Naive thymus-derived CD4-positive, alpha-beta T cell (primary cell): ENCODE measurements at regions of chr15 and their contacts with region 1.

Region 1: DNA sequence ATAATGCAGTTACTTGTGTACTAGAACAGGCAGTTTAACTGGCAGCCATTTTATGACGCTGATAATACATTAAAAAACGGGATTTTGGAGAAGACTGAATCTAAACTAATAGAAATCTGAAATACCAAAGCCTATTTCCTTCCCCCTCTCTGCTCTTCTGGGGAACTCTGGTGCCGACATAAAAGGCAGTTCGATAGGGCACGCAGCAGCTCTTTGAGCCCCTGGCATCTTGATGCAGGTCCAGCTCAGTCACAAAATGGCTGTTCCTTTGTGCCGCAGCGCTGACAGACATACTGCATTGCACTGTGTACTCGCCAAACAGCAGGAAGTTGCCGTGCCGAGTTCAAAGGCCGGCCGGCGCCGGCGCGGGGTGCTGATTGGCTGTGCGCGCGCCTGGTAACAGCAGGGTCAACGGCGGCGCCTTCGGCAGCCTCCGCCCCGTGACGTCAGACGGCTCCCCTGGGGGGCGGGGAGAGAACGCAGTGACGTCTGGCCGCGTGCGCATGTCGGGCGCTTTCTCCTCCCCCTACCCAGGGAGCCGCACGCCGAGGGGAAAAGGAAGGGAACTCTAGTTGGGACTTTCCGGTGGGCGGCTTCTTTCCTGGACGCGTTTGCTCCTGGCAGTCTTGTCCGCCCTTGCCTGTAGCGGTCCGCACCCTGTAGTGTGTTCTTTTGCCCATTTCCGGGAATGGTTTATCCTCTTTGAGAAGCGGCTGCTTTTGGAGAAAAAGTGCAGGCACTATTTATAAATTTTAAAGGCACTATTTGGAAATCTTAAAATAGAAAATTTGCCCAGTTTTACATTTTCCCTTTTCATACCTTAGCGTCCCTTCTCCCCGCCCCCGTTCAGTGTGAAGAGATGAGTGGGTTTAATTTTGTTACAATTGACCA is 4.1 kb downstream of the CHD2 start:
- DNase-seq: peak; percentile 99
- ATAC-seq: peak; percentile 90
- H3K4me3 ChIP-seq: peak overlapping the region; percentile 79
- H3K4me3 Mint-ChIP-seq: peak overlapping the region; percentile 81 to 100 (median 94)
- H3K27ac ChIP-seq: peak overlapping the region; percentile 97
- H3K27ac Mint-ChIP-seq: peak overlapping the region; percentile 96 to 100 (median 100)
- H3K4me1 ChIP-seq: peaks cover 48 to 54% of the 10 kb centered on the region in 2 donors
- H3K4me1 Mint-ChIP-seq: peaks cover 39 to 71% (median 64%) of the 10 kb centered on the region in 7 donors
- H3K27me3 ChIP-seq: no peaks in the 10 kb centered on the region
- H3K27me3 Mint-ChIP-seq: no peaks in the 10 kb centered on the region

Region 2: GRCh38 chr15:92184142-92184541 is 720.0 kb before region 1 on chr15:
- CTCF ChIA-PET with region 1: no interaction called
- POLR2A ChIA-PET with region 1: no interaction called
- intact Hi-C with region 1: no loop called
- DNase-seq: no peak
- ATAC-seq: no peak
- H3K4me3 ChIP-seq: no peak overlapping the region
- H3K4me3 Mint-ChIP-seq: no peak overlapping the region
- H3K27ac ChIP-seq: no peak overlapping the region
- H3K27ac Mint-ChIP-seq: no peak overlapping the region
- H3K4me1 ChIP-seq: no peaks in the 10 kb centered on the region
- H3K4me1 Mint-ChIP-seq: no peaks in the 10 kb centered on the region
- H3K27me3 ChIP-seq: no peaks in the 10 kb centered on the region
- H3K27me3 Mint-ChIP-seq: peaks cover 6 to 30% (median 17%) of the 10 kb centered on the region in 5 donors

Region 3: GRCh38 chr15:92645030-92645756 is 259.0 kb before region 1 on chr15:
- CTCF ChIA-PET with region 1: no interaction called
- POLR2A ChIA-PET with region 1: no interaction called
- intact Hi-C with region 1: no loop called
- DNase-seq: no peak
- ATAC-seq: peak; percentile 38
- H3K4me3 ChIP-seq: no peak overlapping the region
- H3K4me3 Mint-ChIP-seq: no peak overlapping the region
- H3K27ac ChIP-seq: no peak overlapping the region
- H3K27ac Mint-ChIP-seq: no peak overlapping the region
- H3K4me1 ChIP-seq: no peaks in the 10 kb centered on the region
- H3K4me1 Mint-ChIP-seq: peaks cover 0 to 4% (median 0%) of the 10 kb centered on the region in 7 donors
- H3K27me3 ChIP-seq: no peaks in the 10 kb centered on the region
- H3K27me3 Mint-ChIP-seq: peaks cover 0 to 13% (median 3%) of the 10 kb centered on the region in 5 donors

Region 4: DNA sequence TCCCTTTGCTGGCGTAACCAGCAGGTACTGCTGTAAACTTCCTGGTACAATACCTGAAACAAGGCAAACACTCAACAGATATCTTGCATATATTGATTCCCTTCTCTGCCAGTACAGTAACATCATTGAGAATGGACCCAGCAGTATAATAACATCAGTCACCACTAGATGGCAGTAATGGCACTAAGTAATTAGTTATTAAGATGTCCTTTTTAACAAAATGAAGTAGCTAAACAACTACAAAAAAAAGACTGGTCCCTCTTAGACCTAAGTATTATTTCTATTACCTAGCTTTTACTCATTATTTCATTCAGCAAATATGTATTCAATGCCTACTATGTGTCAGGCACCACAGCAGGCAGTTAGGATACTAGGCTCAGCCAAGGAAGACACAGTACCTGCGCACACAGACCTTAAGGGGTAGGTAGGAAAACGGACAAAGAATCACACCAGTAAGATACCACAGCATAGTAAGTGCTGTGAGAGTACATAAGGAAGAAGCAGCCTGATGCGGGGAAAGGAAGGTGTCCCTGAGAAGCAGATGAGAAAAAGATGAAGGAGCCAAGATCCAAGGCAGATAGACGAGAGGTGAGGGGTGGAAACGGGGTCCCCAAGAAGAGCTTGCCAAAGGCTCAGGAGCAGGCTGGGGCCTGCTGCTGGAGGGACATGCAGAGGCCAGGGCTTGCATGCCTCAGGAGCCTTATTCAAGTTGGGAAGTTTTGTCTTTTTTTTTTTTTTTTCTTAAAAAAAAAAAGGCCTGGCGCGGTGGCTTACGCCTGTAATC is 106.8 kb before region 1 on chr15:
- CTCF ChIA-PET with region 1: interaction called, 13 read pairs
- POLR2A ChIA-PET with region 1: interaction called, 13 read pairs
- intact Hi-C with region 1: no loop called
- DNase-seq: peak in 7 of 9 donors; percentile 61 to 81 (median 74)
- ATAC-seq: peak; percentile 95
- H3K4me3 ChIP-seq: no peak overlapping the region
- H3K4me3 Mint-ChIP-seq: peak overlapping the region in 1 of 10 donors; percentile 12
- H3K27ac ChIP-seq: no peak overlapping the region
- H3K27ac Mint-ChIP-seq: peak overlapping the region; percentile 72 to 95 (median 79)
- H3K4me1 ChIP-seq: peaks cover 3 to 4% of the 10 kb centered on the region in 2 donors
- H3K4me1 Mint-ChIP-seq: peaks cover 6 to 23% (median 12%) of the 10 kb centered on the region in 7 donors
- H3K27me3 ChIP-seq: no peaks in the 10 kb centered on the region
- H3K27me3 Mint-ChIP-seq: no peaks in the 10 kb centered on the region

Region 5: GRCh38 chr15:92803847-92804609 is 100.2 kb before region 1 on chr15:
- CTCF ChIA-PET with region 1: interaction called, 38 read pairs
- POLR2A ChIA-PET with region 1: interaction called, 420 read pairs
- intact Hi-C with region 1: loop called (anchors 1 kb)
- DNase-seq: peak in 1 of 9 donors; percentile 85
- ATAC-seq: peak; percentile 85
- H3K4me3 ChIP-seq: no peak overlapping the region
- H3K4me3 Mint-ChIP-seq: peak overlapping the region in 2 of 10 donors; percentile 44 to 49
- H3K27ac ChIP-seq: no peak overlapping the region
- H3K27ac Mint-ChIP-seq: peak overlapping the region in 7 of 9 donors; percentile 2 to 89 (median 50)
- H3K4me1 ChIP-seq: peaks cover 0 to 7% of the 10 kb centered on the region in 2 donors
- H3K4me1 Mint-ChIP-seq: peaks cover 14 to 53% (median 25%) of the 10 kb centered on the region in 7 donors
- H3K27me3 ChIP-seq: no peaks in the 10 kb centered on the region
- H3K27me3 Mint-ChIP-seq: peaks cover 0 to 1% (median 0%) of the 10 kb centered on the region in 5 donors

Region 6: GRCh38 chr15:92820236-92821021 is 83.8 kb before region 1 on chr15:
- CTCF ChIA-PET with region 1: interaction called, 5 read pairs
- POLR2A ChIA-PET with region 1: interaction called, 35 read pairs
- intact Hi-C with region 1: loop called in 1 of 2 experiments (anchors 1 kb)
- DNase-seq: peak; percentile 74 to 90 (median 86)
- ATAC-seq: peak; percentile 95
- H3K4me3 ChIP-seq: peak overlapping the region; percentile 76
- H3K4me3 Mint-ChIP-seq: peak overlapping the region; percentile 63 to 93 (median 88)
- H3K27ac ChIP-seq: peak overlapping the region; percentile 86
- H3K27ac Mint-ChIP-seq: peak overlapping the region; percentile 78 to 98 (median 91)
- H3K4me1 ChIP-seq: peaks cover 16 to 47% of the 10 kb centered on the region in 2 donors
- H3K4me1 Mint-ChIP-seq: peaks cover 25 to 74% (median 70%) of the 10 kb centered on the region in 7 donors
- H3K27me3 ChIP-seq: no peaks in the 10 kb centered on the region
- H3K27me3 Mint-ChIP-seq: no peaks in the 10 kb centered on the region

Region 7: DNA sequence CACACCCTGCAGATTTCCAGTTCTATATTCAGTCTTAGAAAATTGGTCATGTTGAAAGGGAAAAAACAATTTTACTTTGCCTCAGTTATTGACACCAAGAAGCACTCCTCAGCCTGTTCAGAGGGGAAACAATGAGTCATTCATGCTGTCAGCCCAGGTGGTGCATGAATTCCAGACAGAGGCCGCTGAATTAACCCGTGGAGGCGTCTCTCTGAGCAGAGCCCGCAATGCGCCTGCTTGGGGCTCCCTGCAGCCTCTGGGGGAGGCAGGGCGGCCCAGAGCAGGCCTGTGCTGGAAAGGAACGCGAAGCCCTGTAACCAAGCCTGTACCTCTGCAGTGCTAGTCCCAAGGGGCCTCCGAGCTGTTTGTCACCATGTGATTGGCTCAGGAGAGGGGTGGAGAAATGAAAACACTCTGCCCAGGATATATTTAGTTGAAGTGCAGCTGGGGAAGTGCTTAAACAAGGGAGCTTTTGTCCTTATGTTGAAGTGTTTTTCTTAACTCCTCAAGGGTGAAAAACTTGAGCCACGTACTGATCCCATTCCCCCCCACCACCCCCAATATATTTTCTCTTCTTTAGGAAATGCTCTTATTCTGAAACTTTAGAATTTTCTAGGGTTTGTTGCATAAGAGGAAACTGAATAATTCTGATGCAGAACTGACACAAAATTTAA is 72.4 kb before region 1 on chr15:
- CTCF ChIA-PET with region 1: no interaction called
- POLR2A ChIA-PET with region 1: interaction called, 77 read pairs
- intact Hi-C with region 1: loop called (anchors 1 kb)
- DNase-seq: peak; percentile 53 to 98 (median 86)
- ATAC-seq: peak; percentile 94
- H3K4me3 ChIP-seq: peak overlapping the region; percentile 21
- H3K4me3 Mint-ChIP-seq: peak overlapping the region; percentile 74 to 91 (median 81)
- H3K27ac ChIP-seq: peak overlapping the region; percentile 81
- H3K27ac Mint-ChIP-seq: peak overlapping the region; percentile 92 to 98 (median 97)
- H3K4me1 ChIP-seq: peaks cover 31 to 53% of the 10 kb centered on the region in 2 donors
- H3K4me1 Mint-ChIP-seq: peaks cover 26 to 61% (median 50%) of the 10 kb centered on the region in 7 donors
- H3K27me3 ChIP-seq: no peaks in the 10 kb centered on the region
- H3K27me3 Mint-ChIP-seq: no peaks in the 10 kb centered on the region

Region 8: GRCh38 chr15:92839696-92840095 is 64.5 kb before region 1 on chr15:
- CTCF ChIA-PET with region 1: no interaction called
- POLR2A ChIA-PET with region 1: interaction called, 77 read pairs
- intact Hi-C with region 1: no loop called
- DNase-seq: no peak
- ATAC-seq: no peak
- H3K4me3 ChIP-seq: peak overlapping the region; percentile 1
- H3K4me3 Mint-ChIP-seq: peak overlapping the region; percentile 52 to 77 (median 70)
- H3K27ac ChIP-seq: peak overlapping the region; percentile 61
- H3K27ac Mint-ChIP-seq: peak overlapping the region; percentile 67 to 92 (median 90)
- H3K4me1 ChIP-seq: peaks cover 8 to 49% of the 10 kb centered on the region in 2 donors
- H3K4me1 Mint-ChIP-seq: peaks cover 23 to 75% (median 63%) of the 10 kb centered on the region in 7 donors
- H3K27me3 ChIP-seq: no peaks in the 10 kb centered on the region
- H3K27me3 Mint-ChIP-seq: no peaks in the 10 kb centered on the region

Region 9: GRCh38 chr15:93030430-93031105 is 126.4 kb after region 1 on chr15:
- CTCF ChIA-PET with region 1: no interaction called
- POLR2A ChIA-PET with region 1: no interaction called
- intact Hi-C with region 1: no loop called
- DNase-seq: peak; percentile 38 to 69 (median 59)
- ATAC-seq: peak; percentile 85
- H3K4me3 ChIP-seq: no peak overlapping the region
- H3K4me3 Mint-ChIP-seq: peak overlapping the region in 1 of 10 donors; percentile 12
- H3K27ac ChIP-seq: no peak overlapping the region
- H3K27ac Mint-ChIP-seq: peak overlapping the region in 6 of 9 donors; percentile 69 to 82 (median 74)
- H3K4me1 ChIP-seq: peaks cover 0 to 11% of the 10 kb centered on the region in 2 donors
- H3K4me1 Mint-ChIP-seq: peaks cover 6 to 33% (median 20%) of the 10 kb centered on the region in 7 donors
- H3K27me3 ChIP-seq: no peaks in the 10 kb centered on the region
- H3K27me3 Mint-ChIP-seq: no peaks in the 10 kb centered on the region